Left ventricle myocardium inferior (tissue), 1 donor: ENCODE measurements at regions of chr7 and their contacts with region 1.

Region 1: GRCh38 chr7:106659963-106660861 is 746 bp downstream of the CCDC71L start:
- DNase-seq: peak; percentile 75
- H3K4me3 ChIP-seq: peak overlapping the region; percentile 93
- H3K27ac ChIP-seq: peak overlapping the region; percentile 97
- H3K4me1 ChIP-seq: peaks cover 39% of the 10 kb centered on the region
- H3K27me3 ChIP-seq: no peaks in the 10 kb centered on the region
- CTCF ChIP-seq: peak; percentile 74

Region 2: DNA sequence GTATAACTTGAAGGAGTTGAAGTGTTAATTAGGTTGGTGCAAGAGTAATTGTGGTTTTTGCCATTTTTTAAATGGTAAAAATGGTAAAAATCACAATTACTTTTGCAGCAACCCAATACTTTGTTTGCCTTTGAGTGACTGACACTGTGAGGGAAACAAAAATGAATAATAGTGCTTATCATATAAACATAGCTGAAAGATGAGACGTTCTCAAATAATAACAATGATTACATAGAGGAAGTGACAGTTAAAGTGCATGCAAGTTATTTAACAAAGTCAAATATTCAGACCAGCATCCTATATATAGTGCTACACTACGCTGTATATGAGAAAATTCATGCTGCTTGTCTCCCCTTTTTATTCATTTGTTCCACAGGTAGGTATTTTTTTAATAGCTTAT is 503.9 kb after region 1 on chr7:
- intact Hi-C with region 1: loop called (anchors 5 kb)
- DNase-seq: no peak
- H3K4me3 ChIP-seq: no peak overlapping the region
- H3K27ac ChIP-seq: no peak overlapping the region
- H3K4me1 ChIP-seq: peaks cover 12% of the 10 kb centered on the region
- H3K27me3 ChIP-seq: no peaks in the 10 kb centered on the region
- CTCF ChIP-seq: no peak